Endothelial cell of umbilical vein (primary cell): ENCODE measurements at regions of chr9 and their contacts with region 1.

Region 1: DNA sequence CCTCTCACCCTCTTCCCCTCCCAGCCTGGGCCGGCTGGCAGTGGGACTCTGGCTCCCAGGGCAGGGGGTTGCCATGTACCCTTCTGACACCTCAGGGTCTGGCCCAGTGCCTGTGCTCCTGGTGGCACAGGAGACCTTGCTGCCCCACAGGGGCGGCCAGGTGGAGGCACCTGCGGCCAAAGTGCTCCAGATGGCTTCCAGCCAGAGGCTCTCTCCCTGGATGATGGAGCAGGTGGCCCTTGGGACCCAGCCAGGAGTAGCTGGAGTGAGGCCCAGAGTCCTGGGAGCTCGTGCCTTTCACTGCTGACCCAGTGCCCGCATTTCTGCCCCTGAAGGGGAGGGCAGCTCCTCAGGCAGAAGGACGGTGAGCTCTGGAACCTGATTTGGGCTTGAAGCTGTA is 87.3 kb downstream of the NTNG2 start:
- DNase-seq: no peak
- H3K4me3 ChIP-seq: no peak overlapping the region
- H3K27ac ChIP-seq: no peak overlapping the region
- H3K4me1 ChIP-seq: no peaks in the 10 kb centered on the region
- H3K27me3 ChIP-seq: peaks cover 2 to 5% of the 10 kb centered on the region in 2 experiments
- CTCF ChIP-seq: no peak
- POLR2A ChIP-seq: no peak

Region 2: DNA sequence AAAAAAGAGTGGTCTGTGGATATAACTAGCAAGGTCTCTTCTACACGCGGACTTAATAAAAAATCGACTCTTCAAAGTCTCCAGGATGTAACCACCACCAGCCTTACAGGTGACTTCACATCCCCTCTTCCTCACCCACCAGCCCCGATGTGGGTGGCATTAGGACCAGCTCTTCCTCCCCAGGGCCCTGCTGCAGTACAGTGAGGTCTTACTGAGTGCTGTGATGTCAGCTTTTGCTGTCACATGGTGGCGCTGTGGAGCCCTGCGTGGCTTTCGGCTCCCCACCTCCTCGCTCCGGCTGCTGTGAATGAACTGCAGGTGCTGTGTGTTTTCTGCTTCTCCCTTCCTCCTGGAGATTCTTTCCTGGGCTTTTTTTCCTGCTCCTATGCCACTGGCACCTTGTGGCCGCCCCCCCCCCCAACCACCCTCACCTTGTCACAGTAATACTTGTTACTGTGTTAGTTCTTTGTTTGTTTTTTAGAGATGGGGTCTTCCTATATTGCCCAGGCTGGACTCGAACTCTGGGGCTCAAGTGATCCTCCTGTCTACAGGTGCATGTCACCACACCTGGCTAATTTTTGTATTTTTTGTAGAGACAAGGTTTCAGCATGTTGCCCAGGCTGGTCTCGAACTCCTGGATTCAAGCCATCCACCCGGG is 493.5 kb before region 1 on chr9:
- CTCF ChIA-PET with region 1: interaction called, 234 read pairs
- POLR2A ChIA-PET with region 1: interaction called, 13 read pairs
- dilution Hi-C with region 1: no loop called
- intact Hi-C with region 1: loop called (anchors 2 kb)
- DNase-seq: peak; percentile 83
- H3K4me3 ChIP-seq: no peak overlapping the region
- H3K27ac ChIP-seq: no peak overlapping the region
- H3K4me1 ChIP-seq: no peaks in the 10 kb centered on the region
- H3K27me3 ChIP-seq: peaks cover 13 to 14% of the 10 kb centered on the region in 2 experiments
- CTCF ChIP-seq: peak; percentile 78 to 91
- POLR2A ChIP-seq: no peak

Region 3: GRCh38 chr9:132260846-132261245 is 11.7 kb after region 1 on chr9:
- CTCF ChIA-PET with region 1: interaction called, 19 read pairs
- POLR2A ChIA-PET with region 1: no interaction called
- dilution Hi-C with region 1: no loop called
- intact Hi-C with region 1: no loop called
- DNase-seq: peak; percentile 55
- H3K4me3 ChIP-seq: no peak overlapping the region
- H3K27ac ChIP-seq: peak overlapping the region; percentile 40
- H3K4me1 ChIP-seq: peaks cover 20% of the 10 kb centered on the region
- H3K27me3 ChIP-seq: no peaks in the 10 kb centered on the region
- CTCF ChIP-seq: no peak
- POLR2A ChIP-seq: no peak

Region 4: GRCh38 chr9:132333556-132333955 is 84.4 kb after region 1 on chr9:
- CTCF ChIA-PET with region 1: no interaction called
- POLR2A ChIA-PET with region 1: no interaction called
- dilution Hi-C with region 1: no loop called
- intact Hi-C with region 1: no loop called
- DNase-seq: no peak
- H3K4me3 ChIP-seq: no peak overlapping the region
- H3K27ac ChIP-seq: no peak overlapping the region
- H3K4me1 ChIP-seq: no peaks in the 10 kb centered on the region
- H3K27me3 ChIP-seq: no peaks in the 10 kb centered on the region
- CTCF ChIP-seq: no peak
- POLR2A ChIP-seq: no peak